ENCODE measurements at regions of chr10 and their contacts with region 1.

Region 1: GRCh38 chr10:116787893-116788665 is 45.7 kb upstream of the HSPA12A start:
- DNase-seq: peak; percentile 27
- H3K4me3 ChIP-seq: peak overlapping the region; percentile 48
- H3K27ac ChIP-seq: no peak overlapping the region
- H3K27me3 ChIP-seq: peaks cover 3% of the 10 kb centered on the region
- CTCF ChIP-seq: peak; percentile 99

Region 2: GRCh38 chr10:116627386-116627933 is 160.6 kb before region 1 on chr10:
- CTCF ChIA-PET with region 1: interaction called, 47 read pairs
- POLR2A ChIA-PET with region 1: no interaction called
- DNase-seq: no peak
- H3K4me3 ChIP-seq: peak overlapping the region; percentile 31; the same call in 1 of the 2 replicates
- H3K27ac ChIP-seq: no peak overlapping the region
- H3K27me3 ChIP-seq: peaks cover 6% of the 10 kb centered on the region
- CTCF ChIP-seq: peak; percentile 45

Region 3: GRCh38 chr10:116669832-116670644 is 118.0 kb before region 1 on chr10:
- CTCF ChIA-PET with region 1: interaction called, 21 read pairs
- POLR2A ChIA-PET with region 1: no interaction called
- DNase-seq: no peak
- H3K4me3 ChIP-seq: no peak overlapping the region
- H3K27ac ChIP-seq: no peak overlapping the region
- H3K27me3 ChIP-seq: no peaks in the 10 kb centered on the region
- CTCF ChIP-seq: no peak

Region 4: DNA sequence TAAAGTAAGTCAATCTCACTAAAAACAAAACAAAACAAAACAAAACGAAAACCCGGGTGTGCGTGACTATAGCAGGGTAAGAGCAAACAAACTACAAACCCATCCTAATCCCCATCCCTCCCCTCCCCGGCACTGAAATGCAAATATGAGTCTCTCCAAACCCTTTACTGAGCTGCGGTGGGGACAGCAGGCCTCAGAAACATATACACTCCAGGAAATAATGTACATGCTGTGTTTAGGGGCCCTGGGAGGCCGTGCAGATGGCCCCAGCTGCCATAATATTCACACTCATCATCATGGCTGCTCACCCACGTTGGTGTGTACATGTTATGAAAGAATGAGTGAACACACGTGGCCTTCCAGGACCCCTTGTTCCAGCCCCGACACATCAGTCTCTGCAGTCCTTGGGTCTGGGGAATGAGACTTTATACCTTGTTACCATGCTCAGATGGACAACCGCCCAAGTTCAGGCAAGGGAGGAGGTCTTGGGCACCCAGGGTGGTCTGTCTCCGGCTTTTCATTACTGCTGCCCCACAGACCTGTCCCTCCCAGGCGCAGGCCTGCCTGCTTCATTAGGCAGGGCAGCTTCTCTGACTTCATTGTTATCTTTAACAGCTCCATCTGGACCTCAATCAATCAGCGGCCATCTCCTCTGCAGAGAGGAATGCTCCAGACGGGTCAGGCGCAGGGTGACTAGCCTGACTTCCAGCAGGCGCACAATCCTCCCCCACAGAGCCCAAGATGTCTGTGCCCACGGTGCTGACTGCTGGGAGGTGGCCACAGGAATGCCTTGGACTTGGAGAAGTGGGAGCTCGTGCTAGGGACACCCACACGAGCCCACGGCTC is 66.3 kb before region 1 on chr10:
- CTCF ChIA-PET with region 1: interaction called, 18 read pairs
- POLR2A ChIA-PET with region 1: no interaction called
- DNase-seq: no peak
- H3K4me3 ChIP-seq: no peak overlapping the region
- H3K27ac ChIP-seq: peak overlapping the region; percentile 68
- H3K27me3 ChIP-seq: no peaks in the 10 kb centered on the region
- CTCF ChIP-seq: no peak

Region 5: GRCh38 chr10:116748041-116748440 is 40.0 kb before region 1 on chr10:
- CTCF ChIA-PET with region 1: interaction called, 12 read pairs
- POLR2A ChIA-PET with region 1: no interaction called
- DNase-seq: no peak
- H3K4me3 ChIP-seq: no peak overlapping the region
- H3K27ac ChIP-seq: no peak overlapping the region
- H3K27me3 ChIP-seq: no peaks in the 10 kb centered on the region
- CTCF ChIP-seq: no peak

Region 6: DNA sequence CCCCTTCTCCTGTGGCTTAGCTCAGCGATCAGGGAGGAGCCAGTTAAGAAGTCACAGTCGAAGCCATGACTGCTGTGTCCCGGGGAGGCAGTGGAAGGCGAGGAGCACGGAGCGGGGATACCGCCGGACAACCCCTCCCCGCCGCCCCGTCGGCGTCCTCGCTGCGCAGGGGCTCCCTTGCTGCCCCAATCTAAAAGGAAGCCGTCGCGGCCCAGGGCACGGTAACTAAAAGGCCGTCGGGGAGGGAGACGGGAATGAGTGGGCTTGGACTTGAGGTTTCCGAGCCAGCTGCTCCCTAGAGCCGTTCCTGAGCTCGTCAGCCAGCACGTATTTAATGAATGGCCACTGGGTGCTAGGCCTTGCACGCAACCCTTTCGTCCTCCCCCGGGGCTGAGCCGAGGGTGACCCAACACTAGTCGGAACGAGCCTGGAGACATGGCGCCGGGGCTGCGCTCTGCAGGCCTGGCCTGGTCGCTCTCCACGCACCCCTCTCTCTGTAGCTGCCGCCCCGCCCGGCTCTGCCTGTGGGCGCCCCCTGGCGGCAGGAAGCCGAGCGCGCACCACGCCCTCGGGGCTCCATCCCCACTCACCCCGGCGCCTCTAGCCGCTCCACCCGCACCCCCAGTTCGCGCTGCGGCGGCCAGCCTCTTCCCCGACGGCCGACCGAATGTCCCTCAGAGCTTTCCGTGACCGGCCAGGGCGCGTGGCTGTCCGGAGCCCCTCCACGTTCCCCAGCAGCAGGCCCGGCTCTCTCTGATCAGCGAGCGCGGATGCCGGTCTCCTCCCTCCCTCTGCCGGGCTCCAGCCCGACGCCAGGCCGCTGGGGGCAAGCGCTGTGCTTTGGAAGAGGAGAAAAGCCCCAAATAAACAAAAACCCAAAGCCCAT is 380.0 kb after region 1 on chr10:
- CTCF ChIA-PET with region 1: interaction called, 61 read pairs
- POLR2A ChIA-PET with region 1: no interaction called
- DNase-seq: no peak
- H3K4me3 ChIP-seq: no peak overlapping the region
- H3K27ac ChIP-seq: no peak overlapping the region
- H3K27me3 ChIP-seq: peaks cover 86% of the 10 kb centered on the region
- CTCF ChIP-seq: peak; percentile 62

Measured in AG04450 (cell line).